ENCODE measurements at regions of chr9 and their contacts with region 1.

Region 1: DNA sequence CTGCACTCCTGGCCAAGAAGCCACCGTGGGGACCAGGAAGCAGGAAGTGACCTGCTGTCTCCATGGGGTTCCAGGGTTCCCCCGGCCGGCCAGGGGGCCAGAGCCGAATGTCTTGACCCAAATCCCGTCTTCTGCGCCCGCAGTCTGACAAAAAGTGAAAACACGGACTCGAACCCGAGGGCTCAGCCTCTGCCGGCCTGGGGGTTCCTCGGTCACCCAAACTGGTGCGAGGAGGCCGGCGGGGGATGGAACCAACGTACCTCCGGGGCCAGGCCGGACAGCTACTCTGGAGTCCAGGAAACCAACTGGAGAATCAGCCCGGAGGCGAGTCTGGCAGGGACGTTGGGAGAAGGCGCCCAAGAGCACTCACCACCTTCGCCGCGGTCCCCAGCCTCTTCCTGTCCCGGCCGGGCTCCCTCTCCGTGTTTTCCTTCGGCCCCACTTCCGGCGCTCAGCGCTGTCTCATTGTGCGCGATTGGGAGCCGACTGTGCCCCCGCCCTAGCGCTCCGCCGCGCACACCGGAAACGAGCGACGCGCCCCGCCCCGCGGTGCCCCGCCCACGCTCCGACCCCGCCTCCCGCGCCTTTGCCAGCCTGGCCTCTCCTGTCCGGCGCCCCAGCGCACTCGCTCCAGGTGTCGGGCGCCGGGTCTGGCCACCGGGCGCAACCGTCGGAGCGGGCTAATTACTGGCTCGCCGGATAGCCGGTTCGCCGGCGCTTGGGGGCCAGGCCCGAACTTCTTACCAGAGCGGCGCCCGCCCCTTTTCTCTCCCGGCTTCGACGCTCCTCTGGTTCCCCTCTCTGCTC is at the start of gene TUT7:
- DNase-seq: peak; percentile 90
- ATAC-seq: peak; percentile 95
- H3K4me3 ChIP-seq: peak within 1 kb of the TSS; percentile 94 to 100 (median 96)
- H3K27ac ChIP-seq: peak within 1 kb of the TSS; percentile 85
- H3K4me1 ChIP-seq: peaks cover 47% of the 10 kb centered on the region
- H3K27me3 ChIP-seq: no peaks in the 10 kb centered on the region; a peak in 1 of 5 replicates
- CTCF ChIP-seq: 0 out of 2 replicates have a peak, but pooled peaks have one; percentile 1
- EP300 ChIP-seq: no peak
- POLR2A ChIP-seq: peak; percentile 74 to 89; a peak in 3 of 4 replicates
- RAD21 ChIP-seq: peak; percentile 63
- total RNA-seq, gene TUT7: 19.4 and 21.3 TPM in 2 replicates

Region 2: GRCh38 chr9:85676790-85677189 is 677.4 kb before region 1 on chr9:
- CTCF ChIA-PET with region 1: no interaction called
- POLR2A ChIA-PET with region 1: no interaction called
- in situ Hi-C with region 1: no loop called
- intact Hi-C with region 1: no loop called
- DNase-seq: no peak
- ATAC-seq: no peak
- H3K4me3 ChIP-seq: no peak overlapping the region
- H3K27ac ChIP-seq: no peak overlapping the region
- H3K4me1 ChIP-seq: no peaks in the 10 kb centered on the region
- H3K27me3 ChIP-seq: no peaks in the 10 kb centered on the region
- CTCF ChIP-seq: no peak
- EP300 ChIP-seq: no peak
- POLR2A ChIP-seq: no peak
- RAD21 ChIP-seq: no peak

Region 3: DNA sequence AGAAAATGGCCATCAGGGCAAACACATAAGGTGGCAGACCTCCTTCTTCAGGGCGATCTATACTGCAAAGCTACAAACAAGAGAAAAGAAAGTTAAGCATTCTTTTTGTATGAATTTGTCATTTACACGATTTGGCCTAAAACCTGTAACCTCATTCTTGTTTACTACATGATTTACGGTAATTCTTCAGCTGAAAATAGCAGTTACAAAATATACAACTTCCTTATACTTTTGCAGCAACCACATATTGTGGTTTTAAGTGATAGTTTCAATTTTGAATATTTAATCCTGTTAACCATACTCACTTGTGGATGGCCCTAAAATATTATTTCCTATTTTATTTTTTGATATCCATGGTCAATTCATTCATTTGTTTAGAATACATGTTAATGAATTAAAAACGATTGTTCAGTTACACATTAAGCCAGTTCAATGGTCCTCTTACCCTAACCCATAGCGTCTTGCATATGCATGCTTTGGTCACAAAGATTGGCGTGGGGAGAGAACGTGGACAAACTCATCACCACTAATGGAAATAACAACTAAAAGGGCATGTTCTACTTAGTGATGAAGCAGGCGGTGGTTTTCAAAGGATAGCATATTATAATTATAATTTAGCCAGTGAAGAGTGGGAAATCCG is 16.6 kb before region 1 on chr9:
- CTCF ChIA-PET with region 1: no interaction called
- POLR2A ChIA-PET with region 1: no interaction called
- in situ Hi-C with region 1: no loop called
- intact Hi-C with region 1: loop called (anchors 2 kb)
- DNase-seq: no peak
- ATAC-seq: no peak
- H3K4me3 ChIP-seq: no peak overlapping the region
- H3K27ac ChIP-seq: peak overlapping the region; percentile 78
- H3K4me1 ChIP-seq: peaks cover 68% of the 10 kb centered on the region
- H3K27me3 ChIP-seq: no peaks in the 10 kb centered on the region
- CTCF ChIP-seq: no peak
- EP300 ChIP-seq: no peak
- POLR2A ChIP-seq: no peak
- RAD21 ChIP-seq: no peak

Region 4: DNA sequence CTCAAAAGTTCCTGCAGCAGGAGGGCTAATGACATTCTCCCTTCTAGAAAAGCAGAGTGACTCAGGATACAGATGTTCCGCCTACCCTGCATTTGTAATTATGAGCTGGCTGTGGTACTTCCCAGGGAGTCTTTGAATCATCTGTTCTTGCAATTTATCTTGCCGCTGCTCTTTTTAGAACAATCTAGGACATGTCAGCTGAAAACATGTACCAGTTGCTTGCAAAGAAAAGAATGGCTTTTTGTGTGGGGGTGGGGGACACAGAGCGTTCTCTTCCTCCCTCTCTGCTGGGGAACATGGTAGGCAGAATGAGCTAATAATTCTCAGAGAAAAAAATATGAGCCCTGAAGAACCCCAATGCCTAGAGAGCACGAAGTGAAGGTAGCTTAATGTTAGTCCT is 51.7 kb after region 1 on chr9:
- CTCF ChIA-PET with region 1: no interaction called
- POLR2A ChIA-PET with region 1: interaction called, 6 read pairs
- in situ Hi-C with region 1: no loop called
- intact Hi-C with region 1: loop called (anchors 2 kb)
- DNase-seq: peak; percentile 53
- ATAC-seq: peak; percentile 65
- H3K4me3 ChIP-seq: peak overlapping the region in 2 of 3 experiments; percentile 32 to 47; a peak in 3 of 6 replicates
- H3K27ac ChIP-seq: peak overlapping the region; percentile 59
- H3K4me1 ChIP-seq: peaks cover 63% of the 10 kb centered on the region
- H3K27me3 ChIP-seq: no peaks in the 10 kb centered on the region
- CTCF ChIP-seq: no peak
- EP300 ChIP-seq: 0 out of 4 replicates have a peak, but pooled peaks of 1 of the 2 experiments have one; percentile 15
- POLR2A ChIP-seq: no peak
- RAD21 ChIP-seq: no peak

Measured in HepG2 (cell line).